PC-9 (cell line): ENCODE measurements at regions of chr7 and their contacts with region 1.

Region 1: DNA sequence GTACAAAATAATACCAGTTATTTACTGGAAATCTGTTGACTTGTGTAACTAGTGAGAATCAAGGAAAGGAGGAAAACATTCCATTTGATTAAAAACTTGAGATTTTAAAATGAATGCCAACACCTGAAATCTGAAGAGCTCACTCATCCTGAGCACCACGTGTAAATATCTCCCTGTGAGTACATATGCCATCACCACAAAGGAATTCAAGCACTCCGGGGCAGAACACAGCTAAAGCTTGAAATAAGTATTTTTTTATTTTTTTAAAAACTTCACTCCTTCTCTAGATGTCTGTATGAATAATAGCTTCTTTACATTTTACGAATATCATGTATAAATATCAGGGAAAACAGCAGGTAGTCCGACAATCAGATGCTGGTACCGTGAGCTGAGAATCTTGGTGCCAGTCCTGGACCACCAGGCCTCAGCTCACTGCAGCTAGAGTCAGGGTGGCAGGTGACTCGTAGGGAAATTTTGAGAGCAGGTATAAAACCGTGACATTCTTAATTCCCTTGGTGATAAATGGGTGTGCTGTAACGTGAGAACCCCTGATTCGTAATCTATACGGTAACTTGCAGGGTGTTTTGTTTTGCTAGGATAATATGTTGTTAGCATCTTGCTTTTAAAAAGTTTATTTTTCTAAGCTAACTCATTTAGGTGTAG is 12.7 kb downstream of the LMTK2 start:
- DNase-seq: peak; percentile 43 to 87
- H3K4me3 ChIP-seq: peak overlapping the region; percentile 31; the same call in 1 of the 2 replicates
- H3K27ac ChIP-seq: peak overlapping the region; percentile 87
- H3K4me1 ChIP-seq: peaks cover 64% of the 10 kb centered on the region
- H3K27me3 ChIP-seq: no peaks in the 10 kb centered on the region
- CTCF ChIP-seq: no peak

Region 2: DNA sequence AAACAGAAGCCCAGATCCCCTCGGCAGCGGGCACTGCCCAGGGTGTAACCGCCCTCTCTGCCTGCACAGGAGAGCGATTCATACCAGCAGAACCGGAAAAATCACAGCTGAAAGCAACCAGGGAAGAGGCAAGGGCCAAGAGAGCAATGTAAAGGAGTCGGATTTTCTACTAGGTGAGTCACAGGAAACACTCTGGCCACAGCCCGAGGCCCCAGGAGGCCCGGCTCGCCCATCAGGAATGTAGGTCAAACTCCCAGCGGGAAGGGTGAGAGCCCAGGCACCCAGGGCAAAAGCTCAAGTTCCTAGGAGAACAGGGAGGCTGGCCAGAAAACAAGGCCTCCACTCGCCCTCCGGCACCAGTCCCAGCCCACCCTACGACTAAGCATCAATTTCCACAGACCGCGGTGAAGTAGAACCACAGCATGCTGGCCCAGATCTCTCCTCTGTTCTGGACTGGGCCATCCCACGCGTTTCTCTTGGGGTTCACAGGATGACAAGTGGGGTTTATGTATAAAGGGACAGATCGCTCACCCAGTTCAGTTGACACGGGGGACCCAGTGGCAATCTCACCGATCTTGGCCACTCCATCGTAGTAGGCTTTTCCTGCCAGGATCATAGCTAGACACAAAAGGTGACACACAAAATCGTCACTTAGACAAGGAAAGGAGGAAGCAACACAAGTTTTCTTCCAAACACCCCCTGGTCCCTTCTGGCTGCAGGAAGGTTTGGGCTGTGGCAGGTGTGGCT is 235.3 kb after region 1 on chr7:
- CTCF ChIA-PET with region 1: no interaction called
- POLR2A ChIA-PET with region 1: no interaction called
- intact Hi-C with region 1: loop called (anchors 5 kb)
- DNase-seq: peak; percentile 96 to 97
- H3K4me3 ChIP-seq: peak overlapping the region; percentile 52
- H3K27ac ChIP-seq: peak overlapping the region; percentile 94
- H3K4me1 ChIP-seq: peaks cover 93% of the 10 kb centered on the region
- H3K27me3 ChIP-seq: no peaks in the 10 kb centered on the region
- CTCF ChIP-seq: no peak

Region 3: DNA sequence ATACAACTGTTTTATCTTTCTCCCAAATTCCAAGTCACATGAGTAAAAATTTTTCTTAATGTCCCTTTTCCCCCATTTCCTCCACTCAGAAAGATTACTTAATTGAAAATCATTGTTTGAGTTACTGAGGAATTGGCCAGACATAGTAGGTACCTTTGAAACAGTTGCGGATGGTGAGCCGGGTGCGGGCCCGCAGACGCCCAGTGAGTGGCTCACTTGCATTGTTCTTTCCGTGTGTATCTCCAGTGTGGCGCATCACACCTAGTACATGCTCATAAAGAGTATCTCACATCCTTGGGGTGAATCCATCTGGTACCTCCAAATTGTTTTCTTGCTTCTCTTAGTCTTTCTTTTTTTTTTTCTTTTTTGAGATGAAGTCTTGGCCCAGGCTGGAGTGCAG is 773.2 kb after region 1 on chr7:
- CTCF ChIA-PET with region 1: no interaction called
- POLR2A ChIA-PET with region 1: interaction called, 16 read pairs
- intact Hi-C with region 1: no loop called
- DNase-seq: no peak
- H3K4me3 ChIP-seq: no peak overlapping the region
- H3K27ac ChIP-seq: no peak overlapping the region
- H3K4me1 ChIP-seq: no peaks in the 10 kb centered on the region
- H3K27me3 ChIP-seq: no peaks in the 10 kb centered on the region
- CTCF ChIP-seq: no peak